B cell (primary cell): ENCODE measurements at regions of chr4 and their contacts with region 1.

Region 1: GRCh38 chr4:101217353-101218031 is 129.8 kb downstream of the PPP3CA start:
- DNase-seq: no peak
- ATAC-seq: no peak
- H3K4me3 ChIP-seq: no peak overlapping the region
- H3K4me3 Mint-ChIP-seq: no peak overlapping the region
- H3K27ac ChIP-seq: no peak overlapping the region
- H3K27ac Mint-ChIP-seq: no peak overlapping the region
- H3K4me1 ChIP-seq: peaks cover 0 to 8% of the 10 kb centered on the region in 2 donors
- H3K4me1 Mint-ChIP-seq: peaks cover 52% of the 10 kb centered on the region
- H3K27me3 ChIP-seq: no peaks in the 10 kb centered on the region
- H3K27me3 Mint-ChIP-seq: no peaks in the 10 kb centered on the region
- CTCF ChIP-seq: no peak

Region 2: DNA sequence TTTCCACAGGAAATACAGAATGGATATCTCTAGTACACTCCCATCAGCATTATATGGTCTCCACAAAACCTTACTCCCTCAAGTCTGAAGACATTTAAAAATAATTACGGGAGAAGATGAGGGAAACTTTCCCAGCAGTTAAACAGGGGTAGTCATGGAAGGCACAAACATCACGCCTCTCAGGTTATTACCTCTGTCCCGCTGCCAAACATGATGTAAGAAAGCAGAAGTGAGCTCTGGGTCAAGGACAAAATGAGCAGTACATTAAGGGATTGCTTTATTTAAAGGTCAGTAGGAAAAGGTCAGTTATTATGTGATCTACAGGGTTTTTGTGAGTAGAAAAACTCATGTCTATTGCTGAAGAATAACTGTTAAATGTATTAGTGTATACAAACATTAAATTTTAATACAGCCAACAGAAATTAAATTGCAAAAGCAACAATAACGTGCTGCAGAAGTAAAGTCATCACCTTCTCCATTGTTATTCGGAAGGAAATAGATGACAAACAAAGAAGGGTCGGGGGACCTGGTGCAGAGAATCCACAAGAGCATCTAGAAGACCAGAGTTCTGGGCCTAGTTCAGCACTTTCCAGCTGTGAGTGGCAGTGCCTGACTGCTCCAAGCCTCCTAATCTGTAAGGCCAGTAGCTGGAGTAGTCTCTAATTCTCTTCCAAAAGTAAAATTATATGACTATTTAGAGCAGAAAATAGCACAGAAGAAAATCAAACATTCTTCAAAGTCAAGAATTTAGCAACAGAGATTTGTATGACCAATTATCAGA is 41.4 kb before region 1 on chr4:
- CTCF ChIA-PET with region 1: no interaction called
- POLR2A ChIA-PET with region 1: no interaction called
- intact Hi-C with region 1: loop called (anchors 5 kb)
- DNase-seq: no peak
- ATAC-seq: no peak
- H3K4me3 ChIP-seq: no peak overlapping the region
- H3K4me3 Mint-ChIP-seq: no peak overlapping the region
- H3K27ac ChIP-seq: no peak overlapping the region
- H3K27ac Mint-ChIP-seq: no peak overlapping the region
- H3K4me1 ChIP-seq: no peaks in the 10 kb centered on the region
- H3K4me1 Mint-ChIP-seq: peaks cover 54% of the 10 kb centered on the region
- H3K27me3 ChIP-seq: no peaks in the 10 kb centered on the region
- H3K27me3 Mint-ChIP-seq: no peaks in the 10 kb centered on the region
- CTCF ChIP-seq: no peak

Region 3: DNA sequence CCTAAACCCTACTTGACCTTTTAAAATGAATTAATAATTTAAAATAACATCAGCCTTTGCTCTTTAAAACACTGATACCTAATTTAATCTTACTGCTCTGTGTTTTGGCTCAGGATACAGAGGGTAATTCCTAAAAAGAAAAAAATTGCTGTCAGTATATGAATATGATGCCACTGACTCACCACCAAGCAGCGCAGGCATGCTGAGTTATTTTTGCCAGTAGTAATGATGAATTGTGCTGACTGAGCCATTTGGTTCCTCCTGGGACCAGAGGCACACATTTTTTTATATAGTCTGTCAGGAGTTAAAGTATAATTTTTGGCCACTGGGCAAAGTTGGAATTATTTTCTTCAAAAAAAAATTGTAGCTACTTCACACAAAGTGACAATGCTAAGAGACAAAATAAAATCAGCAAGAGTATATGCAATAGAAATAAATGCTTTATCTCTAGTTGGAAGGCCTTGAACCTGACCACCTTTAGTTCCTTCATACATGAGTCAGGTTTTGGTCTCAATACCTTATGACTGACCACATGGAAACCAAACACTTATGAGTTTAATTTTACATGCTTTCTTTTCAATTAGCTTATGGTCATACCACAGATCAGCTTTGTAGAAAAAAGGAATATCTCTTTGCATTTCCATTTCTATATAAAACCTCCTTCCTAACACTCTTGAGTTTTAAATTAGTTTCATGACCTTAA is 14.7 kb after region 1 on chr4:
- CTCF ChIA-PET with region 1: no interaction called
- POLR2A ChIA-PET with region 1: no interaction called
- intact Hi-C with region 1: no loop called
- DNase-seq: no peak
- ATAC-seq: no peak
- H3K4me3 ChIP-seq: no peak overlapping the region
- H3K4me3 Mint-ChIP-seq: no peak overlapping the region
- H3K27ac ChIP-seq: no peak overlapping the region
- H3K27ac Mint-ChIP-seq: no peak overlapping the region
- H3K4me1 ChIP-seq: peaks cover 9 to 21% of the 10 kb centered on the region in 2 donors
- H3K4me1 Mint-ChIP-seq: peaks cover 53% of the 10 kb centered on the region
- H3K27me3 ChIP-seq: no peaks in the 10 kb centered on the region
- H3K27me3 Mint-ChIP-seq: no peaks in the 10 kb centered on the region
- CTCF ChIP-seq: no peak